ENCODE measurements at regions of chr2 and their contacts with region 1.

Region 1: DNA sequence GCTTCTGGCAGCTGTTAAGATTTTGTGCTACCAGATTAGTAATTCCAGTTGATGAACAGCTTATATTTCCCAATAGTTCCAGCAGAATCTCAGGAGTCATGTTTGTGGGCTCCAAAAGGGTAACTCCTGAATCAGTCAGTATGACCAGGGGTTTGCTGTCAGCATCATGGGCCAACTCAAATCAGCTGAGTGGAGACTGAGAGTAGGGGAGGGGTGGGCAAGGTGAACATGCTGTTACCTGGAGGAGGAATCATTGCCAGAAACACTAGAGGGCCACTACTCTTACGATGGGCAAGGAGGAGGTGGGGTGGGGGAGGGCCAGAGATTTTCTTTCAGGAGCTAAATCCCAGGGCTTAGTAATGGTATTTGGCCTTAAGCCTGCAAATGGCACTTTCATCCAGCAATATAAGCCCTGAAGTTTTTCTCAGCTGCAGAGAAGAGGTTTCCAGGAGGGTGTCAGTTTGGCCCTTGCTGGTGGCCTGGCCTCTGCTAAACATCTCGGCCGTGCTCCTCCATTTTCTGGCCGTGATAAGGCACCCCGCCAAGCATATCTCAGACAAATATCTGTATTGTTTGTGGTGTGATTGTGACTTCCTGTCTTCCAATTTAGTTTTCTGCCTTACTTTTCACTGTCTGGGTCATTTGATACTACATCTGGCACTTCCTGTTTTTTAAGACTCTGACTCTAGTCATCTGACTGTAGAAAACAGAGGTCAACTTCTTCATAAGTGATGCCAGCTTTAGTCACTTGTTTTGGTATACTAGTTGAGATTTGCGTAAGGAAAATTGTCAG is 120.5 kb upstream of the CXCR4 start:
- DNase-seq: peak; percentile 38
- ATAC-seq: peak; percentile 77
- H3K4me3 Mint-ChIP-seq: peak overlapping the region; percentile 24
- H3K27ac Mint-ChIP-seq: peak overlapping the region; percentile 92
- H3K4me1 Mint-ChIP-seq: peaks cover 91% of the 10 kb centered on the region
- H3K27me3 Mint-ChIP-seq: no peaks in the 10 kb centered on the region
- CTCF ChIP-seq: no peak

Region 2: DNA sequence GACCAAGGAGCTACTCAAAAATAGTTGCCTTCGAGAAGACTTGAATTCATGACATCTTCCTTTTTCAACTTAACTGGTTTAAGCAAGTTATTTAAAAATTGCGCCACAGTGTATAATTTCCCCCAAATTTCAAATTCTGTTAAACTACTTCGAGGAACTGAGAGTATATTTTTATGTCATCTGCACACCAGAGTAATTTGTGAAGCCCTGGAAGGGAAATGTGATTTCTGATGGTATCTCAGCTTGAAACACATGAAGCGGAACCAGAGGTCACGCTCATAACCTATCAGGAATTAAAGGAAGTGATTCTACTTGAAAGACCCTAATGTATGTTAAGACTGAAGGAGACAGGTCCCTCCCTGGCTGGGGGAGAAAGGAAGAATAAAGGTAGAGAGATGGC is 219.2 kb before region 1 on chr2:
- CTCF ChIA-PET with region 1: no interaction called
- POLR2A ChIA-PET with region 1: interaction called, 3 read pairs
- intact Hi-C with region 1: loop called (anchors 1 kb)
- DNase-seq: no peak
- ATAC-seq: peak; percentile 89
- H3K4me3 Mint-ChIP-seq: peak overlapping the region; percentile 4
- H3K27ac Mint-ChIP-seq: peak overlapping the region; percentile 75
- H3K4me1 Mint-ChIP-seq: peaks cover 34% of the 10 kb centered on the region
- H3K27me3 Mint-ChIP-seq: no peaks in the 10 kb centered on the region
- CTCF ChIP-seq: no peak

Region 3: DNA sequence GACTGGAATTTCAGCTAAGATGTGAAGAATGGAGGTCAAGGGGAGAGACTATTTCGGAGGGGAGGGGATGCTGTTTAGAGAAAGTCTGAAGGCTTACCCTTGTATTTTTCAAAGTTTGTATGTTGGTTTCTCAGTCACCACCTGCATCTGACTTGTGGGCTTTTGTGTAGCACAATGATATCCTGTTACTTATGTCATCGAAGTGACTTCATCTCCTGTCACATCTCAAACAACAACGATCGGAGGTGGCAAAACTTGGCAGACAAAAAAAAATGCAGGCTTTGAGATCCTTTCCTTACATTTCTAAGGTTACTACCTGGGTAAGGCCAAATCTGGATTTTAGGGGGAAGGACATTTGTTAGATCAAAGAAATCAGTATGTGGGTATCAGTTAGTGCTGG is 108.9 kb before region 1 on chr2:
- CTCF ChIA-PET with region 1: interaction called, 7 read pairs
- POLR2A ChIA-PET with region 1: interaction called, 204 read pairs
- intact Hi-C with region 1: loop called (anchors 1 kb)
- DNase-seq: no peak
- ATAC-seq: no peak
- H3K4me3 Mint-ChIP-seq: peak overlapping the region; percentile 73
- H3K27ac Mint-ChIP-seq: peak overlapping the region; percentile 99
- H3K4me1 Mint-ChIP-seq: peaks cover 99% of the 10 kb centered on the region
- H3K27me3 Mint-ChIP-seq: no peaks in the 10 kb centered on the region
- CTCF ChIP-seq: no peak

Region 4: GRCh38 chr2:136217996-136218395 is 20.5 kb before region 1 on chr2:
- CTCF ChIA-PET with region 1: interaction called, 13 read pairs
- POLR2A ChIA-PET with region 1: interaction called, 82 read pairs
- intact Hi-C with region 1: loop called (anchors 1 kb)
- DNase-seq: no peak
- ATAC-seq: peak; percentile 59
- H3K4me3 Mint-ChIP-seq: no peak overlapping the region
- H3K27ac Mint-ChIP-seq: peak overlapping the region; percentile 75
- H3K4me1 Mint-ChIP-seq: peaks cover 96% of the 10 kb centered on the region
- H3K27me3 Mint-ChIP-seq: no peaks in the 10 kb centered on the region
- CTCF ChIP-seq: no peak

Region 5: GRCh38 chr2:136378712-136379595 is 140.5 kb after region 1 on chr2:
- CTCF ChIA-PET with region 1: interaction called, 10 read pairs
- POLR2A ChIA-PET with region 1: interaction called, 43 read pairs
- intact Hi-C with region 1: loop called (anchors 1 kb)
- DNase-seq: no peak
- ATAC-seq: peak; percentile 40
- H3K4me3 Mint-ChIP-seq: no peak overlapping the region
- H3K27ac Mint-ChIP-seq: peak overlapping the region; percentile 92
- H3K4me1 Mint-ChIP-seq: peaks cover 81% of the 10 kb centered on the region
- H3K27me3 Mint-ChIP-seq: no peaks in the 10 kb centered on the region
- CTCF ChIP-seq: peak; percentile 44

Measured in activated B cell treated with CpG ODN at 0.5 μM for 24 hours (primary cell).